AG04449 (cell line): ENCODE measurements at regions of chr7 and their contacts with region 1.

Region 1: DNA sequence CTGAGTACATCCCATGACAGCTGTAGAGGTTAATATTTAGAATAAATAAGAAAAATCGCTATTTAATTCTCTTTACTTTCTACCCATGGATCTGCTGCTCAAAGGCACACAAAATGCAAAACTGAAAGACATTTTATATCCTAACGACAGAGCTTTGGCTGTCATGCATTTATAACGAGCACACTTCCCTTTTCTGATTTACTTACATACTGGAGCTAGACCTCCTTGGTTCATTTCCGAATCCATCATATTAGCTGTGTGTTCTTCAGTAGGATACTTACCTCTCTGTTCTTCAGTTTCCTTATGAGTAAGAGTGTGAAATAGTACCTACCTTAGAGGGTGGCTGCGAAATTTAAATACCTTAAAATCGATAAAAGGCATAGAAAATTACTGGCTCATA is 10.9 kb downstream of the CALCR start:
- DNase-seq: no peak
- H3K4me3 ChIP-seq: no peak overlapping the region
- CTCF ChIP-seq: no peak

Region 2: DNA sequence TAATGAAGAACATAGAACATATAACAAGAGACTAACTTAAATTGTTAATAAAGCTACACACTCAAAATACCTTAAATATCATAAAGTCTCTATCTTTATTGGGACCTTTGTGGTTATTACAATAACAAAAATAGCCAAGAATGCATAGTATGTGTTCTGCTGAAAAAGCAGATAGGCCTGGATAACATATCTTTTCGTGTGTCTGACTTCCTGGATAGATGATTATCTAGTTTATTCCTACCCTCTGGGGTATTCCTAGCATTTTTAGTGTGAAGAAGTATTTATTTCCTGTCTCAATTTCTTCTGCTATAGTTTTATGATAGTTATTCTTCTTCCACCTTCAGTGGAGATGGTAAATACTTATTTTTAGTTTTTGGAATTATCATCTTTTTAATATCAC is 25.5 kb before region 1 on chr7:
- CTCF ChIA-PET with region 1: no interaction called
- POLR2A ChIA-PET with region 1: no interaction called
- DNase-seq: no peak
- H3K4me3 ChIP-seq: no peak overlapping the region
- CTCF ChIP-seq: no peak

Region 3: GRCh38 chr7:93551063-93551904 is 12.3 kb before region 1 on chr7:
- CTCF ChIA-PET with region 1: interaction called, 11 read pairs
- POLR2A ChIA-PET with region 1: no interaction called
- DNase-seq: peak; percentile 23
- H3K4me3 ChIP-seq: no peak overlapping the region
- CTCF ChIP-seq: peak; percentile 38

Region 4: DNA sequence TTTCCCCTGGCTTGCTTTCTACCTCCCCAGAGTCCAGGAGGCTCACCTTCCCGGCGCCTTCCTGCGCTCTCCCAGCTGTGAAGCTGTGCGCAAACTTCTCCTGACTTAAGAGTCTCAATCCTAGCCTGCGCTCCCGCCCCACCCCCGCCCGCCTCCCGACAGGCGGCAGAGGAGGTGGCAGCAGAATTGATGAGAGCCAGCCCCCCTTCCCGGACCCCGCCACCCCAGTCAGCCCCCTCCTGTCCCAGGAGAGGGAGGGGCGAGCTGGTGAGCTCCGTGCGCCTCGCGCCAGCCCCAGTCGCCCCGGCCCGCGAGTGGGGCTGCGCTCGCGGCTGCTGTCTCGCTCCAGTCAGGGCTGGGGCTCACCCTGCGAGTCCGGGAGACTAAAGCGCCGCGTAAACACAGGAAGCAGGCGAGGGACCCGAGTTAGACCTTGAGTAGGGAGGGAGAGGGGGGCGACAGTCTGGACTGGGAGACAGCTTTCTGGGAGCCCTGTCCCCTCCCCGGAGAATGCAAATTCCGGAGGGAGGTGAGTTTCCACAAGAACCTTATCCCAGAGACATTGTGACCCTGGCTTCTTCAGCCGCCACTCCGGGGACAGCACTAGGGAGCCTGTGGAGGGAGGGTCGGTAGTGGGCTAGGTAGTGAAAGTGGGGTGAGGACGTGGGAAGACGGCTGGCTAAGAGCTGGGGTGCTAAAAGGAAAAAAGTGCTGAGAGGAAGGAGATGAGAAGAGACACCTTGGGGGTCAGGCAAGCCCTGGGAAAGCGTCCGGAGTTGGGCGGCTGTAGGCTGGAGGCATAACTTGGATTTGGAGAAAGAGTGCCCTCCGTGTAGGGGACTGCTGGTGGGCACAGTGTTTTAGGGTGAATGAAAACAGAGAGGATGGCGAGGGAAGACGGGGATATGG is 11.3 kb after region 1 on chr7 and contains the start of gene CALCR:
- CTCF ChIA-PET with region 1: no interaction called
- POLR2A ChIA-PET with region 1: no interaction called
- DNase-seq: no peak
- H3K4me3 ChIP-seq: no peak within 1 kb of the TSS
- CTCF ChIP-seq: no peak